Activated T-helper 1 cell treated with anti-CD3 and anti-CD28 coated beads, Interleukin-12 subunit alpha, Interleukin-12 subunit beta, Interleukin-2, Interleukin-4 antibody, amounts not matched to agents 30 ng/mL and 10 ng/mL and 1 ng/mL, durations not matched to agents 14 hours and 24 hours and 36 hours (primary cell): ENCODE measurements at regions of chr11 and their contacts with region 1.

Region 1: DNA sequence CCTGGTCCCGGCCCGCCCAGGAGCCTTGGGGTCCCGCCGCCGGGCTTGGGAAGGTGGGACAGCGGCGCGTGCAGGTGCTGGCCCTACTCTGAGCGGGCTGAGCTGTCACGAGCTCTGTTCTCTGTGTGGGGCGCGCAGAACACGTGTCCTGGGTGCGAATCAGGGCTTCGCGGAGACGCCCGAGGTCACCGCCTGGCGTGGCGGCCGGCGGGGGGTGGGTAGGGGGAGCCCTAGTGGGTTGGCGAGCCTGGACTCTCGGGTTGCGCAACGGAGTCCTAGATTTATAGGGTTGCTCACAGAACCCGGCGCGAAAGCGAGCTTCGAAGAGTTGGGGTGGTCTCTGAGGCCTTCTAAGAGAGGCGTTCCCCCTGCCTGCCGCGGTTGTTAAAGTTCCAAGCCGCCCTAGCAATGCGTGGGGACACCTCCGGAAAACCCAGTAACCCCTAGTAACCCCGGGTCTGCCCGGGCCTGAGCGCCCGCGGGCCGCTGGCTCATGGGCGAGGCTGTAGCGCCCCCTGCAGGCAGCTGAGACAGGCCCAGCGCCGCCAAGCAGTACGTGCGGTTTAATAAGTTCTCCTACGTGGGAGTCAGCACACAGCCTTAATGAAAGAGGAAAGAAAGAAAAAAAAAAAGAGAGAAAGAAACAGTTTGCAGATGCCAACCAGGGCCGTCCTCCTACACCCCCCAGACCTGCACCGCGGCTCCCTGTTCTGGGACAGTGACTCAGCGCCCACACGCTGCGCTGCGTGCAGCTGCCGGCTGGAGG is 2.8 kb downstream of the ADM start:
- DNase-seq: peak; percentile 71
- H3K4me3 Mint-ChIP-seq: peak overlapping the region; percentile 77
- H3K27ac Mint-ChIP-seq: peak overlapping the region; percentile 83
- H3K4me1 Mint-ChIP-seq: peaks cover 68% of the 10 kb centered on the region
- H3K27me3 Mint-ChIP-seq: peaks cover 52% of the 10 kb centered on the region

Region 2: DNA sequence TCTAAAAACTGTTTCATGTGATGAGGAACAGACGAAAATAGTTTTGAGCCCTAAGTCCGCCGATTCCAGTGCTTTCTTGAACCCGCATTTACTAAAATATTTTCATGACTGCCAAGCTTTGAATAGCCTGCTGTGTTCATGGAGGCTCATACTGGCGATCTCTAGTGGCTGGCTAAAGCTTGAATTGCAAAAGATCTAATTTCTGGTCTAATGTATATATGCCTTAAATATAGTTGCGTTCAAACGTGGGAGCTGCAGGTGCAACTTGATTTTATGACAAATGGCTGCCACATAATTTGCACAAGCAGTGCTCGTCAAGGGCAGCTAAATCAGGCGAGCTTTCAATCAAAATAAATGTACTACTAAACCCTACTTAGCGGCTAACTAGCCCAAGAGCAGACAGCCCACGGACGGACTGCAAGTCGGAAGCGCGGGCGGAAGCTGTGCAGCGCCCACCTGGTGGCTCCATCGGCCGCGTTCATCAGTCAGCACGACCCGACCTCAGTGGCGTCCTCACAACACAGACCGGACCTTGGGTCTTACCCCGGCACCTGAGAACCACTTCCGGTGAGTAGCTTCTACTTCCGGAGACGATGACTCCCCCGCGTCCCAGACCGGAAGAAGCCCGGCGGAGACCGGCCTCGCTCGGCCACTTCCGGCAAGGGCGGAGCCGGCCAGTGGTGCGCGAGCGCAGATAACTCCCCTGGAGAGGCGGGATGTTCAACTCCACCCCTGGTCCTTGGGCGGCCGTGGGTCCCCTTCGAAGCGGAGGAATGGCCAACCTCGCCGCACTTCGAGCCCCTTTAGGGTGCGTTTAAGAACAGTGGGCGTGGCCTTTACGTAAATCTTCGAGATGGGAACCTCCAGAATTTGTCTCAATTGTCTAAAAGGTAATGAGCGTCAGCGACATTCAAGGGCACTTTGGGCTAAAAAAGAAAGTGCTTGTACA is 1618.9 kb before region 1 on chr11:
- intact Hi-C with region 1: loop called (anchors 10 kb)
- DNase-seq: peak; percentile 82
- H3K4me3 Mint-ChIP-seq: peak overlapping the region; percentile 94
- H3K27ac Mint-ChIP-seq: peak overlapping the region; percentile 91
- H3K4me1 Mint-ChIP-seq: peaks cover 60% of the 10 kb centered on the region
- H3K27me3 Mint-ChIP-seq: no peaks in the 10 kb centered on the region

Region 3: GRCh38 chr11:9460322-9461067 is 847.1 kb before region 1 on chr11 and contains the start of gene ZNF143:
- intact Hi-C with region 1: loop called (anchors 5 kb)
- DNase-seq: peak; percentile 100
- H3K4me3 Mint-ChIP-seq: peak within 1 kb of the TSS; percentile 98
- H3K27ac Mint-ChIP-seq: peak within 1 kb of the TSS; percentile 97
- H3K4me1 Mint-ChIP-seq: peaks cover 27% of the 10 kb centered on the region
- H3K27me3 Mint-ChIP-seq: no peaks in the 10 kb centered on the region
- total RNA-seq, gene ZNF143: 30.3 and 30.7 TPM in 2 replicates

Region 4: GRCh38 chr11:9757809-9758636 is 549.6 kb before region 1 on chr11:
- intact Hi-C with region 1: loop called (anchors 1 kb)
- DNase-seq: peak; percentile 87
- H3K4me3 Mint-ChIP-seq: peak overlapping the region; percentile 80
- H3K27ac Mint-ChIP-seq: peak overlapping the region; percentile 76
- H3K4me1 Mint-ChIP-seq: peaks cover 57% of the 10 kb centered on the region
- H3K27me3 Mint-ChIP-seq: peaks cover 2% of the 10 kb centered on the region

Region 5: DNA sequence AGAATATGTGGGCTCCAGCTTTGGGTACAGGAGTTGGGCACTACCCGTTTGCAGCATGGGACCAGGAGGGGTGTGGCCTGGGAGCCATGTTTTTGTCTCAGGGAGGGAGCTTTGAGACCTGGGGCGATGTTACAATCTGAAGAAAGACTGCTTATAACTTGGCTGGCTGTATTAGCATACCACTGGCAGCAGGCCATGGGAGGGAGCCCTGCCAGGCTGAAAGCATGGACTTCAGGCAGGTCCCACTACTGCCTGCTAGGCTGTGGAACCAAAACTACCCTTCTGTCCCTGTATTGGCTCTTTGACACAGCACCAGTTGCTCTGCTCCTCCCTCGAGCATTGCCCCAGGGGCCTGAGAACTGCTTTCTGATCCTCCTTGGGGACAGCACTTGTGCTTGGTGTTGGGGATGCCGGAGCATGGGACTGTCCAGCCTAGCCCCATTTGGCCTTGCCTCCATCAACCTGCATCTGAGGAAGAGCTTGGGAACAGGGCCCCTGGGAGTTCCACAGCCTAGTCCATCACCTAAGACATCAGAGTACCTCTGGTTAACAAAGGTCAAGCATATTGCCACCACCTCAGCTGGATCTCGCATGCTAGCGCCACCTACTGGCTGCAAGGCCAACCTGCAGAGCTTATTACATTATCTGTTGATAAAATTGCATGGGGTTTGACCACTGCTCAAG is 231.0 kb before region 1 on chr11:
- intact Hi-C with region 1: loop called (anchors 5 kb)
- DNase-seq: peak; percentile 10
- H3K4me3 Mint-ChIP-seq: no peak overlapping the region
- H3K27ac Mint-ChIP-seq: no peak overlapping the region
- H3K4me1 Mint-ChIP-seq: no peaks in the 10 kb centered on the region
- H3K27me3 Mint-ChIP-seq: no peaks in the 10 kb centered on the region

Region 6: GRCh38 chr11:10366568-10367370 is 59.1 kb after region 1 on chr11:
- intact Hi-C with region 1: loop called (anchors 1 kb)
- DNase-seq: peak; percentile 51
- H3K4me3 Mint-ChIP-seq: no peak overlapping the region
- H3K27ac Mint-ChIP-seq: no peak overlapping the region
- H3K4me1 Mint-ChIP-seq: peaks cover 5% of the 10 kb centered on the region
- H3K27me3 Mint-ChIP-seq: peaks cover 5% of the 10 kb centered on the region

Region 7: GRCh38 chr11:10933455-10934292 is 626.0 kb after region 1 on chr11:
- intact Hi-C with region 1: loop called (anchors 5 kb)
- DNase-seq: peak; percentile 61
- H3K4me3 Mint-ChIP-seq: peak overlapping the region; percentile 76
- H3K27ac Mint-ChIP-seq: peak overlapping the region; percentile 65
- H3K4me1 Mint-ChIP-seq: peaks cover 22% of the 10 kb centered on the region
- H3K27me3 Mint-ChIP-seq: peaks cover 64% of the 10 kb centered on the region